Spleen (tissue), 13 donors: ENCODE measurements at regions of chr15 and their contacts with region 1.

Region 1: GRCh38 chr15:92949604-92950249 is 49.6 kb downstream of the CHD2 start:
- DNase-seq: no peak
- H3K4me3 ChIP-seq: peak overlapping the region in 1 of 8 donors; percentile 4
- H3K27ac ChIP-seq: no peak overlapping the region
- H3K4me1 ChIP-seq: no peaks in the 10 kb centered on the region
- H3K27me3 ChIP-seq: no peaks in the 10 kb centered on the region
- CTCF ChIP-seq: no peak
- POLR2A ChIP-seq: no peak

Region 2: DNA sequence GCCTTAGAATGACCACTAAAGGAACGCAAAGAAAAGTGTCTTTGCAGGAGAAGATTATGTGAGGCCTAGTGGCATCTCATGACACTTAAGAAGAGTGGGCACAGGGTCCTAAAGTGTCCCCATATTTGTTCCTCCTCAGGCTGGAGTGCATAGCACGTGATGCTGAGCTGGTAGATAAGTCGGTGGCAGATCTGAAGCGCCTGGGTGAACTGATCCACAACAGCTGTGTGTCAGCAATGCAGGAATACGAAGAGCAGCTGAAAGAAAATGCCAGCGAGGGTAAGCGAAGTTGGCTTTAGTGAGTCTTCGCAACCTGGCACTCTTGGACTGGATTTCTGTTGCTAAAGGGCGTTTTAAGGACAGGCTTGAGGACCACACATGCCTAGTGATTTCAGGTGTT is 43.0 kb after region 1 on chr15:
- intact Hi-C with region 1: loop called (anchors 10 kb)
- DNase-seq: no peak
- H3K4me3 ChIP-seq: no peak overlapping the region
- H3K27ac ChIP-seq: no peak overlapping the region
- H3K4me1 ChIP-seq: peaks cover 0 to 16% (median 0%) of the 10 kb centered on the region in 6 donors
- H3K27me3 ChIP-seq: no peaks in the 10 kb centered on the region
- CTCF ChIP-seq: no peak
- POLR2A ChIP-seq: no peak